PC-3 (cell line): ENCODE measurements at regions of chr1 and their contacts with region 1.

Region 1: GRCh38 chr1:64171797-64172281 is 31.6 kb upstream of the UBE2U start:
- DNase-seq: peak; percentile 85
- ATAC-seq: peak; percentile 69
- H3K4me3 ChIP-seq: peak overlapping the region; percentile 34; the same call in 1 of the 2 replicates
- H3K27ac ChIP-seq: peak overlapping the region; percentile 92
- H3K4me1 ChIP-seq: peaks cover 31% of the 10 kb centered on the region
- H3K27me3 ChIP-seq: no peaks in the 10 kb centered on the region
- CTCF ChIP-seq: no peak

Region 2: DNA sequence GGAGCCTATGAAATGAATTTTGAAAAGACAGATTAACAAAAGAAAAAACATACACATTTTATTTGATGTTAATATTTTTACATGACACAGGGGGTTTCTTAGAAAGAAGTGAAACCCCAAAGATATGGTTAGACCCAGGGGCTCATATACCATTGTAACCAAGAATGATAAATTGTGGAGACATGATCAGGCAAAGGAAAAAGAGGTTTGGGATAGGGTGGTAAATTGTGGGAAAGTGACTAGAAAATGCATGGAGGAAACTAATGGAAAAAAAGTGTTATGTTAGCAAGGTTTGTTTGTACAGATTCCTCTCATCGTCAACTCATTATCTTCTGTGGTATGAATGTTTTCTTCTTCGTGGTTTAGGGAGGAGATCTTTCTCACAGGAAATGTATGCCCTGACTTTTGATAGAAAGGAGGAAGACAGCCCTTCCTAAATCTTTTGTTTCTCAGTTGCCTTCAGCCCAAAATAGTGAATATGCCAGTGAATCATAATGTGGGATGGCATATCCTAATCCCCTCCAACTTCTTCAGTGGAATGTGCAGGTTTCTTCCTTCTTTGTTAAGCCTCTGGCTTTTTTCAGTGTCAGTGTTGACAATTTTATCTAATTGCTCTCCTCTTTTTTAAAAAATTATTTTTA is 108.8 kb before region 1 on chr1:
- CTCF ChIA-PET with region 1: no interaction called
- POLR2A ChIA-PET with region 1: no interaction called
- intact Hi-C with region 1: no loop called
- DNase-seq: peak; percentile 20
- ATAC-seq: no peak
- H3K4me3 ChIP-seq: no peak overlapping the region
- H3K27ac ChIP-seq: no peak overlapping the region
- H3K4me1 ChIP-seq: no peaks in the 10 kb centered on the region; the same call in 1 of the 2 replicates
- H3K27me3 ChIP-seq: no peaks in the 10 kb centered on the region
- CTCF ChIP-seq: no peak

Region 3: DNA sequence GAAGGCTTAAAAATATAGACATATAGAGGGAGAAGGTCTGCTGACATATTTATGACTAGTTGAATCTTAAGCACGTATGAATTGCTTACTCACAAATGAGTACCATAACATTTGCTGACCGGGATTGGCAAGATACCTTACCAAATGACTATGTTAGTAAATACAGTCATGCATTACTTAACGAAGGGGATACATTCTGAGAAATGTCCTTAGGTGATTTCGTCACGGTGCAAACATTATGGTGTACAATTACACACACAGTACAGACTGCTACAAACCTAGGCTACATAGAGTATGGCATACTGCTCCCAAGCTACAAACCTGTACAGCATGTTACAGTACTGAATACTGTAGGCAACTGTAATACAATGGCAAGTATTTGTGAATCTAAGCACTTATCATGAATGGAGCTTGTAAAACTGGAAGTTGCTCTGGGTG is 12.2 kb after region 1 on chr1:
- CTCF ChIA-PET with region 1: no interaction called
- POLR2A ChIA-PET with region 1: no interaction called
- intact Hi-C with region 1: loop called (anchors 1 kb)
- DNase-seq: peak; percentile 98
- ATAC-seq: peak; percentile 95
- H3K4me3 ChIP-seq: no peak overlapping the region
- H3K27ac ChIP-seq: peak overlapping the region; percentile 93
- H3K4me1 ChIP-seq: peaks cover 32% of the 10 kb centered on the region
- H3K27me3 ChIP-seq: no peaks in the 10 kb centered on the region
- CTCF ChIP-seq: no peak

Region 4: DNA sequence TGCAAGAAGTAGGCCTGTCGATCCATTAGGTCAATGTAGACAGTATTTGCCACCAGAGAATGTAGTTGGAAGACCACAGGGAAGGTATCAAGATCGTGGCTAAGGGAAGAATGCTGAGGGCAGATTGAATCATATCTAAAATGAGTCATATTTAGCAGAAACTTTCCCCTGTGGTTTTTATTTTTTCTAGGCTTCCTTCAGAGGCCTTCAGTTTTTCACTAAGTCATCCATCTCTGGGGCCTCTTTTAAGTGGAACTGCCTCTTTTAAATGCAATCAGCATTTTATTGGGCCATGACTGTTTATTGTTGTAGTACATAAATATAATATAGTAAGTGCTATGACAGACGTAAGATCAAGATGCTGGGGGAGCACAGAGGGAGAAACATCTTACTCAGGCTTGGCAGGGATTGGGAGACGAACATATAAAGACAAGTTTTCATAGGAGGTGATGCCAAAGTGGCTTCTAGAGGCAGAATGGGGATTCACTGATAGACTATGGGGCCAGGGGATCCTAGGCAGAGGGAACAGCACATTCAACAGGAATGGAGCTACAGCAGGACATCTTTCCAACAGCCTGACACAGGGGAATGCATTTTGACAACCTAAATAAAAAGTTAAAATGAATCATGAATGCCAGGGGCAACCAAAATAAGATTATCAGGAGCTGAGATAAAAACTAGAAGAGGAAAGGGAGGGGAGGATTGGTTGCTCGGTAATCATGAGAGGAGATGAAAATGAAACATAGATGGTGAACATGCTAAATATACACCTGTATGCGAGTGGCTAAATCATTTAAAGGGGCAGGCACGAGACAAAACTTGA is 51.7 kb after region 1 on chr1:
- CTCF ChIA-PET with region 1: no interaction called
- POLR2A ChIA-PET with region 1: no interaction called
- intact Hi-C with region 1: loop called (anchors 5 kb)
- DNase-seq: peak; percentile 87
- ATAC-seq: peak; percentile 76
- H3K4me3 ChIP-seq: peak overlapping the region; percentile 9; the same call in 1 of the 2 replicates
- H3K27ac ChIP-seq: peak overlapping the region; percentile 84
- H3K4me1 ChIP-seq: peaks cover 18% of the 10 kb centered on the region
- H3K27me3 ChIP-seq: no peaks in the 10 kb centered on the region
- CTCF ChIP-seq: no peak